ENCODE measurements at regions of chr5 and their contacts with region 1.

Region 1: GRCh38 chr5:143557061-143557818 is 153.8 kb upstream of the NR3C1 start:
- DNase-seq: peak; percentile 61 to 83 (median 75)
- H3K4me3 ChIP-seq: no peak overlapping the region
- H3K4me3 Mint-ChIP-seq: no peak overlapping the region
- H3K27ac ChIP-seq: peak overlapping the region in 1 of 2 donors; percentile 54
- H3K27ac Mint-ChIP-seq: peak overlapping the region; percentile 71 to 89 (median 87)
- H3K4me1 ChIP-seq: peaks cover 29 to 51% of the 10 kb centered on the region in 2 donors
- H3K4me1 Mint-ChIP-seq: peaks cover 37% of the 10 kb centered on the region
- H3K27me3 ChIP-seq: no peaks in the 10 kb centered on the region
- H3K27me3 Mint-ChIP-seq: no peaks in the 10 kb centered on the region
- CTCF ChIP-seq: no peak

Region 2: DNA sequence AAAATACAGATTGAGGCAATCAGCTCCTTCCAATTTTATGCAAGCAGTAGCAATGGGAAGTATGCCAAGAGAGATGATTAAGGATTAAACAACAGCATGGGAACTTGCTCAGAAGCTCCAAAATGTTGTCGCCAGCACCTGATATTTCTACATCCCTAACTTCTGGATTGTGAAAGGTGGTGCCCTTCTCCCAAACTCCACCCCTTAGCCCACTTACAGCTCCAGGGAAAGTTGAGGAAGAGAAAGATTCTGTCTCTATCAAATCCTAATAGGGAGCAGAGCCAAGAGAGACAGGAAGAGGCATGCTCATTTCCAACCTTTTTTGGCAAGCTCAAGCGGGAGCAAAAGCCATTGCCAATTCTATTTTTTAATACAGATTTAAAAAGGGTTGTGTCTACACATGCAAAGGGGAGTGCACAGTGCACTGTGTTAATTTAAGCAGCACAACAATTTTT is 61.4 kb before region 1 on chr5:
- intact Hi-C with region 1: loop called in 1 of 2 experiments (anchors 10 kb)
- DNase-seq: peak; percentile 53 to 86 (median 77)
- H3K4me3 ChIP-seq: peak overlapping the region in 1 of 3 experiments; percentile 43
- H3K4me3 Mint-ChIP-seq: peak overlapping the region; percentile 28 to 44
- H3K27ac ChIP-seq: peak overlapping the region in 1 of 2 donors; percentile 62
- H3K27ac Mint-ChIP-seq: peak overlapping the region; percentile 65 to 92 (median 86)
- H3K4me1 ChIP-seq: peaks cover 39 to 42% of the 10 kb centered on the region in 2 donors
- H3K4me1 Mint-ChIP-seq: peaks cover 45% of the 10 kb centered on the region
- H3K27me3 ChIP-seq: no peaks in the 10 kb centered on the region
- H3K27me3 Mint-ChIP-seq: peaks cover 0 to 6% (median 0%) of the 10 kb centered on the region in 3 donors
- CTCF ChIP-seq: no peak

Region 3: GRCh38 chr5:143605403-143606005 is 48.3 kb after region 1 on chr5:
- intact Hi-C with region 1: loop called (anchors 2 to 5 kb)
- DNase-seq: peak; percentile 80 to 95 (median 85)
- H3K4me3 ChIP-seq: peak overlapping the region in 1 of 3 experiments; percentile 48
- H3K4me3 Mint-ChIP-seq: peak overlapping the region in 1 of 2 donors; percentile 85
- H3K27ac ChIP-seq: peak overlapping the region; percentile 79 to 94
- H3K27ac Mint-ChIP-seq: peak overlapping the region; percentile 94 to 100 (median 99)
- H3K4me1 ChIP-seq: peaks cover 59 to 68% of the 10 kb centered on the region in 2 donors
- H3K4me1 Mint-ChIP-seq: peaks cover 59% of the 10 kb centered on the region
- H3K27me3 ChIP-seq: no peaks in the 10 kb centered on the region
- H3K27me3 Mint-ChIP-seq: peaks cover 2 to 6% (median 2%) of the 10 kb centered on the region in 3 donors
- CTCF ChIP-seq: no peak

Region 4: GRCh38 chr5:143662020-143662419 is 104.8 kb after region 1 on chr5:
- intact Hi-C with region 1: no loop called
- DNase-seq: no peak
- H3K4me3 ChIP-seq: no peak overlapping the region
- H3K4me3 Mint-ChIP-seq: no peak overlapping the region
- H3K27ac ChIP-seq: no peak overlapping the region
- H3K27ac Mint-ChIP-seq: no peak overlapping the region
- H3K4me1 ChIP-seq: peaks cover 6 to 14% of the 10 kb centered on the region in 2 donors
- H3K4me1 Mint-ChIP-seq: peaks cover 24% of the 10 kb centered on the region
- H3K27me3 ChIP-seq: no peaks in the 10 kb centered on the region
- H3K27me3 Mint-ChIP-seq: peaks cover 0 to 2% (median 2%) of the 10 kb centered on the region in 3 donors
- CTCF ChIP-seq: no peak

Region 5: DNA sequence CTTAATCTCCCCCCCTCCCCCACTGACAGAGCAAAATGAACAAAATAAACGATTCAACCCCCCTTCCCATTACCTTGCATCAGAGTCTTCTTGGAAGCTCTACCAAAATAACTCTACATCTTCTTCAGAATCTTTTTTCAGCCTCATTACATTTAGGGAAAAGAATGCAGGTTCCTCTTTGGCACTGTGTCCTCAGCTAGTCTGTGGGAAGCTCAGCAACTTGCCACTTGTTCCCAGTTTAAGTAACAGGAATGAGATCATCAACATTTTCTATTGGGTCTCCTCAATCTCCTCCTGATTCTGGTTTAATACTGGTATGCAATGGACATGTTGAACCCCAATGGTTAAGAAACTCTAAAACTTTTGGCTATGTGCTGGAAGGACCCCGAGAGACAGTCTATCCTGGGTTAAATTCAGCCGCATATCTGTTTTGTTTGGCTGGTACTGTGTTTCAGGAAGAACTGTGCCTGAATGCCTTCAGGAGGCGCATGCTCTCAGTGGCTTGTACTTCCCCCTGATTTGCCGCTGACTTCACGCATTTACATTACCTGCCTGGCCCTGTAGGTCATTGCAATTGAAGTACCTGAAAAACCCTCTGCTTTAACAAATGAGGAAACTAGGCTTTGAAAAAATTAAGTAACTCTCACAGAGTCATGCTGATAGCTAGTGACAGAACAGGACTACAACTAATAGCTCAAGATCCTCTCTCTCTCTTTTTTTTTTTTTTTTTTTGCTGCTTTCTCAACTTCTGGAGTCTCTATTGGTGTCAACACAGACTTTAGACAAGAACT is 176.6 kb after region 1 on chr5:
- intact Hi-C with region 1: no loop called
- DNase-seq: no peak
- H3K4me3 ChIP-seq: no peak overlapping the region
- H3K4me3 Mint-ChIP-seq: no peak overlapping the region
- H3K27ac ChIP-seq: no peak overlapping the region
- H3K27ac Mint-ChIP-seq: no peak overlapping the region
- H3K4me1 ChIP-seq: no peaks in the 10 kb centered on the region
- H3K4me1 Mint-ChIP-seq: no peaks in the 10 kb centered on the region
- H3K27me3 ChIP-seq: no peaks in the 10 kb centered on the region
- H3K27me3 Mint-ChIP-seq: peaks cover 0 to 2% (median 0%) of the 10 kb centered on the region in 3 donors
- CTCF ChIP-seq: no peak

Region 6: GRCh38 chr5:144024545-144024944 is 467.3 kb after region 1 on chr5:
- intact Hi-C with region 1: no loop called
- DNase-seq: no peak
- H3K4me3 ChIP-seq: no peak overlapping the region
- H3K4me3 Mint-ChIP-seq: no peak overlapping the region
- H3K27ac ChIP-seq: no peak overlapping the region
- H3K27ac Mint-ChIP-seq: no peak overlapping the region
- H3K4me1 ChIP-seq: no peaks in the 10 kb centered on the region
- H3K4me1 Mint-ChIP-seq: no peaks in the 10 kb centered on the region
- H3K27me3 ChIP-seq: no peaks in the 10 kb centered on the region
- H3K27me3 Mint-ChIP-seq: peaks cover 1 to 6% (median 2%) of the 10 kb centered on the region in 3 donors
- CTCF ChIP-seq: no peak